ENCODE measurements at regions of chr7 and their contacts with region 1.

Region 1: GRCh38 chr7:47266131-47266706 is 315.7 kb downstream of the TNS3 start:
- DNase-seq: peak; percentile 83
- H3K4me3 ChIP-seq: no peak overlapping the region; a peak in 1 of 4 replicates
- H3K27ac ChIP-seq: no peak overlapping the region
- H3K4me1 ChIP-seq: peaks cover 0 to 2% of the 10 kb centered on the region in 2 experiments; a peak in 1 of 4 replicates
- H3K27me3 ChIP-seq: no peaks in the 10 kb centered on the region
- CTCF ChIP-seq: peak; percentile 99
- EP300 ChIP-seq: no peak
- RAD21 ChIP-seq: peak; percentile 100

Region 2: GRCh38 chr7:46871516-46871915 is 394.7 kb before region 1 on chr7:
- CTCF ChIA-PET with region 1: no interaction called
- POLR2A ChIA-PET with region 1: no interaction called
- DNase-seq: no peak
- H3K4me3 ChIP-seq: no peak overlapping the region
- H3K27ac ChIP-seq: no peak overlapping the region
- H3K4me1 ChIP-seq: no peaks in the 10 kb centered on the region; a peak in 1 of 4 replicates
- H3K27me3 ChIP-seq: no peaks in the 10 kb centered on the region
- CTCF ChIP-seq: no peak
- EP300 ChIP-seq: no peak
- RAD21 ChIP-seq: no peak

Region 3: DNA sequence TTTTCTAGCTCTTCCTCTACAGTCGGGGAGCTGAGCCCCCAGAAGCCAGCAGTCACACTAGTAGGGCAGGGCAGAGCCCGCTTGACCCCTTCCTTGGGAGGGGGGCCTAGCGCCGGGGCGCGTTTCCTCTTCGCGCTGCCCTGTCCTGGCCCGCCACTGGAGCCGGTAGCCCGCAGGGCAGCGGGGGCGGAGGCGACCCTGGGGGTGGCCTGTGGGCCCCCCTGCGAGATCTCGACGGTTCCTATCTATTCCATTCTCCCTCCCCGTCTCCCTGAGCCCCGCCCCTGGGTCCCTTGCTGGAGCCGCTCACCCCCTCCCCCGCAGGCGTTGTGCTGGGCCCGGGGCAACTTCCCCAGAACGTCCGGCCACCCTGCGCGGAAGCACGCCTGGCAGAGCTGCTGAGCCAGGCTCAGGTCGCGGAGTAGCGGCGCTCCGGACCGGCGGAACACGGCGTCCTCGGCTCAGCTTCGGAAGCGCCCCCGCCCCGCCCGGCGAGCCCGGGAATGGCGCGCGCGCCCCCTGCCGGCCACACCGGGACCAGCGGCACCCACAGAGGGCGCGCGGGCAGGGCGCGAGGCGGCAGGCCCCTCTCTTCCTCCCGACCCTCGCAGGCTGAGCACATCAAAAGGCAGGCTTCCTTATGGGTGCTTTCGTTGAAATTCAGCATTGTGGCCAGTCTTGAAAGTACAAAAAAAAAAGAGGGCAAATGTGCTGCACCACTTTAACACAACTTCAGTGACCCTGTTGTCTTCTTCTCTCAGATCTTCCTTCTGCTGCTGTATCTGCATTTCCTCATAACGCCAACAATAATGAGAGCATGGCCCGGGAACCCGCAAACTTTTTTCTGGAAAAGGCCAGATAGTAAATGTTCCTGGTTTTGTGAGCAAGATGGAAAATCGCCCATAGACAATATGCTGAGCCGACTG is 11.9 kb before region 1 on chr7:
- CTCF ChIA-PET with region 1: interaction called, 139 read pairs
- POLR2A ChIA-PET with region 1: interaction called, 4 read pairs
- DNase-seq: peak; percentile 98
- H3K4me3 ChIP-seq: peak overlapping the region; percentile 65 to 71
- H3K27ac ChIP-seq: peak overlapping the region; percentile 58 to 62
- H3K4me1 ChIP-seq: peaks cover 4 to 14% of the 10 kb centered on the region in 2 experiments; a peak in 2 of 4 replicates
- H3K27me3 ChIP-seq: no peaks in the 10 kb centered on the region
- CTCF ChIP-seq: peak; percentile 98
- EP300 ChIP-seq: no peak
- RAD21 ChIP-seq: peak; percentile 66

Region 4: DNA sequence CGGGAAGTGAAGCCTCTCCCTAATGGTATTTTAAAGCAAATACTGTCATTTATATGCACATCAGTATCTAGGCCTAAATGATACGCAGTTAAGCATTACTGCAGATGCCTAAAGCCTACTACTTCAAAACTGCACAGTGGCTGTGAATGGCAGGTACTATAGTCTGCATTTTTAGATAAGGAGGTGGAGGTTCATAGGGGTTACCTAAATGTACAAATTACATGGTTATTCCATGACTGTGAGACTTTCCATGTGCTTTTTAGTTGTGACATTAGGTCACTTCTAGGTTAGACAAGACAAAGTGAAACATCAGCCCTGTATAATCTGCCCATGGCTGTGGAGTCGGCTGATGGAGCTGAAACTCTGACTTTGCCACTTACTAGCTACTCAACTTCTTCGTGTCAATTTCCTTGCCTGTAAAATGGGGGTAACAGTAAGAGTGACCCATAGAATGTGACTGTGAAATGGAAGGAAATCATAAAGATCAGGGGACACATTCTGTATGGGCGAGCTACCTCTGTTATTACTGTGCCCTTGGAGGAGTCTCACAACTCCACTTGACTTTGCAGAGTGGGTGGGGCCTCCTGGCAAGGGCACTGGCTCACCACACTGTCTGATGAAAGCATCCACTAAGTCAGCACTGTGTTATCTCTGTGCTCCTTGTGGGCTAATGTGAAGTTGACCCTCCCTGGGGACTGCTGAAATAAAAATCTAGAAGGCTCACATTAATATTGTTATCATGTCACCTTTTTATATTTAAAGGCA is 76.3 kb after region 1 on chr7:
- CTCF ChIA-PET with region 1: interaction called, 20 read pairs
- POLR2A ChIA-PET with region 1: no interaction called
- DNase-seq: no peak
- H3K4me3 ChIP-seq: no peak overlapping the region
- H3K27ac ChIP-seq: no peak overlapping the region
- H3K4me1 ChIP-seq: no peaks in the 10 kb centered on the region
- H3K27me3 ChIP-seq: no peaks in the 10 kb centered on the region
- CTCF ChIP-seq: no peak
- EP300 ChIP-seq: no peak
- RAD21 ChIP-seq: no peak

Region 5: GRCh38 chr7:47435889-47436312 is 169.7 kb after region 1 on chr7:
- CTCF ChIA-PET with region 1: interaction called, 151 read pairs
- POLR2A ChIA-PET with region 1: no interaction called
- DNase-seq: peak; percentile 79
- H3K4me3 ChIP-seq: no peak overlapping the region
- H3K27ac ChIP-seq: no peak overlapping the region
- H3K4me1 ChIP-seq: peaks cover 0 to 12% of the 10 kb centered on the region in 2 experiments; a peak in 2 of 4 replicates
- H3K27me3 ChIP-seq: no peaks in the 10 kb centered on the region
- CTCF ChIP-seq: peak; percentile 79
- EP300 ChIP-seq: no peak
- RAD21 ChIP-seq: peak; percentile 95

Region 6: GRCh38 chr7:47536661-47537611 is 270.7 kb after region 1 on chr7:
- CTCF ChIA-PET with region 1: interaction called, 11 read pairs
- POLR2A ChIA-PET with region 1: no interaction called
- DNase-seq: peak; percentile 86
- H3K4me3 ChIP-seq: peak overlapping the region; percentile 38 to 49
- H3K27ac ChIP-seq: peak overlapping the region; percentile 30 to 69; a peak in 3 of 4 replicates
- H3K4me1 ChIP-seq: peaks cover 13 to 43% of the 10 kb centered on the region in 2 experiments
- H3K27me3 ChIP-seq: no peaks in the 10 kb centered on the region
- CTCF ChIP-seq: no peak
- EP300 ChIP-seq: no peak; a peak in 1 of 4 replicates
- RAD21 ChIP-seq: no peak

Region 7: DNA sequence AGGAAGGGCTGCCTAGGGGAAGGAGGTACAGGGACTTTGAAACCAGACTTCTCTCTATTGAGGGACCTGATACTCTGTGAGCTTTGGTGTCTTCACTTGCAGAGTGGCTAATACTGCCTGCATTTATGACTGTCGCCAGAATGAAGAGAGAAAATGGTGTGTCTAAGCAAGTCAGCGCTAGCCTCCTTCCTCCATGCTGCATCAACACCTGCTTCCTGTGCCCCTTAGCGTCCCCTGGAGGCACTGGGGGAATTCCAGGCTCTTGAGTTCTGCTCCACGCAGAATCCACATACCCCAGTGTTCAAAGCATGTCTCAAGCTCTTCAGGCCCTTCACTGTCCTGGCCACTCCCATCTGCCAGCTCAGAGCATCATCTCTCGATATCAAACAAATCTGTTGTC is 541.5 kb after region 1 on chr7:
- CTCF ChIA-PET with region 1: interaction called, 275 read pairs
- POLR2A ChIA-PET with region 1: no interaction called
- DNase-seq: no peak
- H3K4me3 ChIP-seq: no peak overlapping the region
- H3K27ac ChIP-seq: no peak overlapping the region
- H3K4me1 ChIP-seq: peaks cover 0 to 27% of the 10 kb centered on the region in 2 experiments; a peak in 1 of 4 replicates
- H3K27me3 ChIP-seq: no peaks in the 10 kb centered on the region
- CTCF ChIP-seq: no peak
- EP300 ChIP-seq: no peak
- RAD21 ChIP-seq: no peak

Region 8: GRCh38 chr7:47968847-47969774 is 702.9 kb after region 1 on chr7:
- CTCF ChIA-PET with region 1: interaction called, 18 read pairs
- POLR2A ChIA-PET with region 1: no interaction called
- DNase-seq: peak; percentile 89
- H3K4me3 ChIP-seq: no peak overlapping the region; a peak in 1 of 4 replicates
- H3K27ac ChIP-seq: no peak overlapping the region
- H3K4me1 ChIP-seq: peaks cover 0 to 2% of the 10 kb centered on the region in 2 experiments; a peak in 2 of 4 replicates
- H3K27me3 ChIP-seq: no peaks in the 10 kb centered on the region
- CTCF ChIP-seq: peak; percentile 100
- EP300 ChIP-seq: no peak
- RAD21 ChIP-seq: peak; percentile 82